Gastrocnemius medialis (tissue), 4 donors: ENCODE measurements at regions of chr3 and their contacts with region 1.

Region 1: GRCh38 chr3:58305882-58306711 is at the starts of genes HTD2 and RPP14:
- DNase-seq: peak; percentile 96 to 98
- ATAC-seq: peak; percentile 87 to 90
- H3K4me3 ChIP-seq: peak within 1 kb of the TSS; percentile 60 to 88 (median 80)
- H3K27ac ChIP-seq: peak within 1 kb of the TSS; percentile 89 to 99 (median 95)
- H3K4me1 ChIP-seq: peaks cover 30 to 35% of the 10 kb centered on the region in 2 donors
- H3K27me3 ChIP-seq: peaks cover 0 to 2% (median 0%) of the 10 kb centered on the region in 3 donors
- CTCF ChIP-seq: peak; percentile 92 to 97 (median 95)
- POLR2A ChIP-seq: peak; percentile 80 to 86
- total RNA-seq, gene HTD2: 14.1 to 26.2 (median 21.7) TPM
- total RNA-seq, gene RPP14: 16.6 to 28.9 (median 17.1) TPM

Region 2: GRCh38 chr3:57597122-57597923 is 708.8 kb before region 1 on chr3 and contains the start of gene ARF4:
- in situ Hi-C with region 1: no loop called
- intact Hi-C with region 1: loop called (anchors 5 kb)
- DNase-seq: peak; percentile 99 to 100
- ATAC-seq: peak; percentile 92 to 94
- H3K4me3 ChIP-seq: peak within 1 kb of the TSS; percentile 72 to 96 (median 92)
- H3K27ac ChIP-seq: peak within 1 kb of the TSS; percentile 95 to 99 (median 98)
- H3K4me1 ChIP-seq: peaks cover 44 to 48% of the 10 kb centered on the region in 2 donors
- H3K27me3 ChIP-seq: no peaks in the 10 kb centered on the region
- CTCF ChIP-seq: peak in 2 of 5 experiments; percentile 7 to 8
- POLR2A ChIP-seq: peak; percentile 97 to 98
- total RNA-seq, gene ARF4: 36.2 to 55.2 (median 47.7) TPM

Region 3: GRCh38 chr3:57983734-57984518 is 322.2 kb before region 1 on chr3:
- in situ Hi-C with region 1: no loop called
- intact Hi-C with region 1: no loop called
- DNase-seq: peak; percentile 22 to 53
- ATAC-seq: peak; percentile 72 to 86
- H3K4me3 ChIP-seq: no peak overlapping the region
- H3K27ac ChIP-seq: peak overlapping the region in 2 of 4 donors; percentile 23 to 52
- H3K4me1 ChIP-seq: peaks cover 4 to 5% of the 10 kb centered on the region in 2 donors
- H3K27me3 ChIP-seq: no peaks in the 10 kb centered on the region
- CTCF ChIP-seq: no peak
- POLR2A ChIP-seq: no peak

Region 4: DNA sequence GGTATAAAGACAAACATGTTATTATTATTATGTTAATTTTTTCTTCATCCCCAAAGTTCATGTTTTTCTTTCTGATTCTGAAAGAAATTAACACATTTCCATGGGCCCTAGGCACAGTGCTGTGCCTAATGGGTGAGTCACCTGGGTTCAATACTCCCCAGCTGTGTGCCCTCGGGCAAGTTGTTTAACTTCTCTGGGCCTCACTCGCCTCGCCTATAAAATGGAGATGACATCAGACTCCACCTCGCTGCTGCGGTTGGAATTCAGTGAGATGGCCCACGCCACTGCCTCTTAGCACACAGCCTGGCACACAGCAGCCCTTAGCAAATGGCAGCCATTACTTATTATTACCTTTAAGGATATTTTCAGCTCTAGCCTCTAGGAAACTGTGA is 117.9 kb before region 1 on chr3:
- in situ Hi-C with region 1: loop called in 3 of 4 experiments (anchors 5 to 10 kb)
- intact Hi-C with region 1: loop called (anchors 2 kb)
- DNase-seq: no peak
- ATAC-seq: no peak
- H3K4me3 ChIP-seq: no peak overlapping the region
- H3K27ac ChIP-seq: peak overlapping the region in 3 of 4 donors; percentile 38 to 62 (median 60)
- H3K4me1 ChIP-seq: peaks cover 2 to 12% of the 10 kb centered on the region in 2 donors
- H3K27me3 ChIP-seq: no peaks in the 10 kb centered on the region
- CTCF ChIP-seq: no peak
- POLR2A ChIP-seq: no peak

Region 5: GRCh38 chr3:58246148-58247047 is 59.7 kb before region 1 on chr3:
- in situ Hi-C with region 1: no loop called
- intact Hi-C with region 1: no loop called
- DNase-seq: no peak
- ATAC-seq: peak in 1 of 2 donors; percentile 33
- H3K4me3 ChIP-seq: no peak overlapping the region
- H3K27ac ChIP-seq: peak overlapping the region in 1 of 4 donors; percentile 23
- H3K4me1 ChIP-seq: peaks cover 0 to 3% of the 10 kb centered on the region in 2 donors
- H3K27me3 ChIP-seq: no peaks in the 10 kb centered on the region
- CTCF ChIP-seq: no peak
- POLR2A ChIP-seq: no peak

Region 6: DNA sequence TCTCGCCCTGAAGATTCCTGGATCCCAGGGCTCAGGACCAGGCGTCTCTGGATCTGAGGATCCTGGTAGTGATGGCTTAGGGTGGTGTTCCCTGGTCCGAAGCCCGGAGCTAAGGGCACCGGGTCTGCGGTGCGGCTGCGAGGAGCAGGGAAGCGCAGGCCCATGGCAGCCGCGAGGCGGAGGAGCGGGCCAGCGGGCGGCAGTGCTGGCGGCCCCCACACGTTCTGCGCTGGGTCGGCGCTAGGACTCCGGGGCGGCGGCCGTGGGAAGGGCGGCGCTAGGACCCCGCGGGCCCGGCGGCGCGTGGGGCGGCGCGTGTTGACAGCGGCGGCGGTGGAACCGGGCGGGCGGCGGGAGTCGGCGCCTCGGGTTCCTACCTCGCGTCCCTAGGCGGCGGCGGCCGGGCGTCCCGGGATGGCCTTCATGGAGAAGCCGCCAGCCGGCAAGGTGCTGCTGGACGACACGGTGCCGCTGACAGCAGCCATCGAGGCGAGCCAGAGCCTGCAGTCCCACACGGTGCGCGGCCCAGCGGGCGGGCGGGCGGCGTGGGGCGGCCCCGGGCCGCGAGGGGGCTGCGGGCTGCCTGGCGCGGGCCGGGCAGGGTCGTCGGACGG is 26.6 kb after region 1 on chr3 and contains the start of gene PXK:
- in situ Hi-C with region 1: no loop called
- intact Hi-C with region 1: loop called (anchors 1 kb)
- DNase-seq: peak; percentile 55 to 74
- ATAC-seq: peak; percentile 84 to 87
- H3K4me3 ChIP-seq: peak within 1 kb of the TSS; percentile 84 to 92 (median 85)
- H3K27ac ChIP-seq: peak within 1 kb of the TSS; percentile 72 to 78 (median 76)
- H3K4me1 ChIP-seq: peaks cover 27 to 30% of the 10 kb centered on the region in 2 donors
- H3K27me3 ChIP-seq: no peaks in the 10 kb centered on the region
- CTCF ChIP-seq: peak in 3 of 5 experiments; percentile 25 to 54 (median 48)
- POLR2A ChIP-seq: peak; percentile 62 to 69
- total RNA-seq, gene PXK: 21.6 to 33.6 (median 24.4) TPM

Region 7: DNA sequence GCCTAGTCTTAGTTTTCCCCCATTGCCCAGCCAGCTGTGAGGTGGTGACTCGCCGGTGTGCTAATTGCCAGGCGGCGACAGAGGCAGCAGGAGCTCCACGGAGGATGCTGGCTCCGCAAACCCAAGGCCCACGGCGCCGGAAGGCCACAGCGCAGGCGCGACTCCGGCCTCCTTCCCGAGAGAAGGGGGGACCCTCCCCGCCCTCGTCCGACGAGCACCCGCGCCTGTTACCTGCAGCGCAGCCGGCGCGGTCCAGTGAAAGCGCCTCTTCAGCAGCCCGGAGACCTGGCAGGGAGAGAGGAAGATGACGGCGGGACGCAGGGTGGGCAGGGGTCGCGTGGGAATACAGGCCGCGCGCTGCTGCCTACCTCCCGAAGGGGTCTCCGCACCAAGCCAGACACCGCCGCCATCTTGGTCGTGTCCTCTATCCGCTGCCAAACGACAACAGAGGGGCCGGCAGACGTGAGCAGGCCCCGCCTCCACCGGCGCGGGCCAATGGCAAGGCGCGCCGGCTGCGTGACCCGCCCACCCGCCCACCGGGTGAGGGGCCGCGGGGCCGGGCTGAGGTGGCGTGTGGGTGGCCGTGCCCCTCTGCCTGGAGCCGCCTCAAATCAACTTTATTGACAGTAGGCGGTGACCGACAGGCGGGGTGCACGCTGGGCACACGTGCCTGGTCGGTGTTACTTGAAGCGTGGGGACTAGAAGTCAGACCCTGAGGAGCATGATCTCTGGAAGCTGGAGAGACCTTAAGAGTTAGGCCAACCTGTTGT is 127.5 kb after region 1 on chr3 and contains the start of gene PDHB:
- in situ Hi-C with region 1: no loop called
- intact Hi-C with region 1: loop called (anchors 5 kb)
- DNase-seq: peak; percentile 85 to 89
- ATAC-seq: peak; percentile 98
- H3K4me3 ChIP-seq: peak within 1 kb of the TSS; percentile 64 to 83 (median 76)
- H3K27ac ChIP-seq: peak within 1 kb of the TSS; percentile 87 to 95 (median 90)
- H3K4me1 ChIP-seq: peaks cover 20 to 23% of the 10 kb centered on the region in 2 donors
- H3K27me3 ChIP-seq: no peaks in the 10 kb centered on the region
- CTCF ChIP-seq: peak in 1 of 5 experiments; percentile 12
- POLR2A ChIP-seq: peak; percentile 73 to 79
- total RNA-seq, gene PDHB: 131 to 195 (median 169) TPM

Region 8: DNA sequence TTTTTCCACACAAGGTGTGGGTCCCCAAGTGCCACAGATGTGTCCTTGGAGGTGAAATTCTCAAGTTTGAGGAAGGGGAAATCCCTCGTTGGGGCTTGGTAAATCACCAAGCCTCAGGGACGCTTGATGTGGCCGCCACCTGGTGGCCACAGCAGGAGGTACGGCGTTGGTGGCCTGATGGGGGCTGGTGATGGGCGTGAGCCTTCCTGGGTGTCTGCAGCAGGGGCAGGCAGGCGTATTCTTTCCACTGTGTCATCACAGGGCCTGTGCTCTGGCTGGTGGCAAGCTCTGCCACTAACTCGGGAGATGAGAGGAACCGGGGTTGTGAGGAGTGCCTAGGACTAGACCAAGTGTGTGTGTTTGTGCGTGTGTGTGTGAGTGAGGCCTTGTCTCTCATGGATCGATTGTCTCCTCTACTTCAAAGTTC is 226.7 kb after region 1 on chr3:
- in situ Hi-C with region 1: no loop called
- intact Hi-C with region 1: loop called (anchors 5 kb)
- DNase-seq: peak; percentile 25 to 56
- ATAC-seq: peak; percentile 59 to 69
- H3K4me3 ChIP-seq: no peak overlapping the region
- H3K27ac ChIP-seq: no peak overlapping the region
- H3K4me1 ChIP-seq: peaks cover 16 to 20% of the 10 kb centered on the region in 2 donors
- H3K27me3 ChIP-seq: no peaks in the 10 kb centered on the region
- CTCF ChIP-seq: peak; percentile 88 to 95 (median 92)
- POLR2A ChIP-seq: no peak

Region 9: DNA sequence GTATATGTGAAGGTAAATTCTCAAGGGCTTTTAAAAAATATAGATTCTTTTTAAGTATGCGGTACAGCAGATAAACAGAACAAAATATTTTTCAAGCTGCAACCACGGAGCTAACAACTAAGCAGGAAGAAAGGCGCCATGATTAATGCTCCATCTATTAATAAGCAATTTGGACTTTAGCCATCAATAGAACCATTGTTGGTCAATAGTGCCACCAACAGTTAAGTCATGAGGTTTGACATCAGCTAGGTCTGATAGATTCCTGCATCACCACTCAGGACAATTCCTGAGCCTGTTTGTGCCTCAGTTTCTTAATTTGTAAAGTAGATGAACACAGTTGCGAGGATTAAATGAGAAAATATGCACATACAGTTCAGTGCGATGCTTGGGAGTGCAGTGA is 425.6 kb after region 1 on chr3:
- in situ Hi-C with region 1: no loop called
- intact Hi-C with region 1: no loop called
- DNase-seq: no peak
- ATAC-seq: no peak
- H3K4me3 ChIP-seq: no peak overlapping the region
- H3K27ac ChIP-seq: no peak overlapping the region
- H3K4me1 ChIP-seq: no peaks in the 10 kb centered on the region
- H3K27me3 ChIP-seq: no peaks in the 10 kb centered on the region
- CTCF ChIP-seq: no peak
- POLR2A ChIP-seq: no peak